ENCODE measurements at regions of chr12 and their contacts with region 1.

Region 1: GRCh38 chr12:6873094-6874014 is at the start of gene SPSB2:
- DNase-seq: peak; percentile 96

Region 2: GRCh38 chr12:6883683-6884082 is 10.3 kb after region 1 on chr12:
- CTCF ChIA-PET with region 1: interaction called, 14 read pairs
- POLR2A ChIA-PET with region 1: interaction called, 13 read pairs
- DNase-seq: no peak

Region 3: GRCh38 chr12:6904280-6905278 is 31.2 kb after region 1 on chr12 and contains the start of gene LRRC23:
- CTCF ChIA-PET with region 1: interaction called, 11 read pairs
- POLR2A ChIA-PET with region 1: interaction called, 10 read pairs
- DNase-seq: peak; percentile 89

Region 4: DNA sequence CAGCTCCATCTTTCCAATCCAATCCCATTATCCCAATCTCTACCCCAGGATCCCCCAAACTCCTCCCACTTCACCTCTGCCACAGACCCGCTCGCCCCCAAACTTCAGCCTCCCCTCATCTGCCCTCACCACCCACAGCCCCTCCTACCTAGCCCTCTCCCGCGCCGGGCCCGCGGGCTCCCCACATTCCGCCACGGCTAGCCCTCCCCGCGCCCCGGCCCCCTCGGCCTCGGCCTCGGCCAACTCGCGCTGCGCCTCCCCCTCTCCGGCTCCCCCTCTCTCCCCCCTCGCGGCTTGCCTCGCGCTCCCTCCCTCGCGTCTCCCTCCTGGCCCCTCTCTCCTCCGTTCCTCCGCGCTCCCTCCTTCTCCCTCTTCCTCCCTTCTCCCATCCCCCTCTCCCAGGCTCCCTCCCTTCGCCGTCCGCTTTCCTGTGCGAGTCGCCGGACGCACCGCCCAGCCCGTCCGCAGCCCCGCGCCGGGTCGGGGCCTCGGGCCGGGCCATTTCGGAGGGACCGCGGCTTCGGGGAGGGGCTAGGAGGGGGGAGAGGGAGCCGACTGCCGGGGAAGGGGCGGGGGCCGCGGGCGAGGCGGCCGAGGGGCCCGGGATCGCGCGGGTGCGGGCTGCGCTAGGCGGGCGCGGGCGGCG is 54.1 kb after region 1 on chr12 and contains the start of gene ATN1:
- CTCF ChIA-PET with region 1: interaction called, 10 read pairs
- POLR2A ChIA-PET with region 1: interaction called, 32 read pairs
- DNase-seq: peak; percentile 54

Region 5: GRCh38 chr12:6965026-6965661 is 91.8 kb after region 1 on chr12:
- CTCF ChIA-PET with region 1: interaction called, 15 read pairs
- POLR2A ChIA-PET with region 1: interaction called, 23 read pairs
- DNase-seq: peak; percentile 81

Measured in HEK293T (cell line).